Calu3 (cell line): ENCODE measurements at regions of chr7 and their contacts with region 1.

Region 1: DNA sequence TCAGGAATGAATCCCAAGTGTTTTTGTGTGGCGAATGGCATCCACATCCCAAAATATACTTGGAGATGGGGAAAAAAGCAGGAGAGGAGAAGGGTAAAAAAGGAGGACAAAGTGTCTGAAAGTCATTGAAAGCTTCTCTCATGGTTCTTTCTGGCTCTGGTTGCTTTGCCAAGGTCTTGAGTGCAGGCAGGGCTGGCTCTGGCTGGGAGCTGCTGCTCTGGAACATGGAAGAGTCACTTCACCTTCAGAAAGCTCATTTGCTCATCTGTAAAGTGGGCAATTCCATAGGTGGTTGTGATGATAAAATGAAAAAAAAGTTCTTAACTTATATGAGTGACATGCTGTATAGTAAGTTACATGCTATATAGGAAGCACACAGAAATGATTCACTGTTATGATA is 2.9 kb upstream of the PRSS2 start:
- DNase-seq: no peak
- H3K4me3 Mint-ChIP-seq: no peak overlapping the region
- H3K27ac Mint-ChIP-seq: no peak overlapping the region
- H3K4me1 Mint-ChIP-seq: peaks cover 13% of the 10 kb centered on the region
- H3K27me3 Mint-ChIP-seq: peaks cover 80% of the 10 kb centered on the region
- CTCF ChIP-seq: no peak

Region 2: GRCh38 chr7:142795339-142795863 is 27.5 kb after region 1 on chr7:
- CTCF ChIA-PET with region 1: no interaction called
- intact Hi-C with region 1: loop called (anchors 1 kb)
- DNase-seq: peak; percentile 14
- H3K4me3 Mint-ChIP-seq: no peak overlapping the region
- H3K27ac Mint-ChIP-seq: no peak overlapping the region
- H3K4me1 Mint-ChIP-seq: peaks cover 22% of the 10 kb centered on the region
- H3K27me3 Mint-ChIP-seq: peaks cover 92% of the 10 kb centered on the region
- CTCF ChIP-seq: no peak